CD4-positive, alpha-beta memory T cell (primary cell): ENCODE measurements at regions of chr16 and their contacts with region 1.

Region 1: GRCh38 chr16:89490387-89491237 is at the start of gene ANKRD11:
- DNase-seq: peak; percentile 99 to 100 (median 100)
- H3K4me3 ChIP-seq: peak within 1 kb of the TSS; percentile 64 to 72
- H3K4me3 Mint-ChIP-seq: peak within 1 kb of the TSS; percentile 88 to 97 (median 94)
- H3K27ac ChIP-seq: peak within 1 kb of the TSS; percentile 95
- H3K27ac Mint-ChIP-seq: peak within 1 kb of the TSS; percentile 96 to 99 (median 97)
- H3K4me1 ChIP-seq: peaks cover 57% of the 10 kb centered on the region
- H3K4me1 Mint-ChIP-seq: peaks cover 35 to 77% (median 57%) of the 10 kb centered on the region in 4 donors
- H3K27me3 ChIP-seq: no peaks in the 10 kb centered on the region
- H3K27me3 Mint-ChIP-seq: no peaks in the 10 kb centered on the region
- total RNA-seq, gene ANKRD11: 229 to 246 TPM

Region 2: GRCh38 chr16:89241187-89242007 is 249.2 kb before region 1 on chr16:
- CTCF ChIA-PET with region 1: no interaction called
- POLR2A ChIA-PET with region 1: no interaction called
- intact Hi-C with region 1: loop called (anchors 1 kb)
- DNase-seq: peak; percentile 92 to 97 (median 93)
- H3K4me3 ChIP-seq: peak overlapping the region; percentile 73 to 80
- H3K4me3 Mint-ChIP-seq: peak overlapping the region; percentile 90 to 98 (median 96)
- H3K27ac ChIP-seq: peak overlapping the region; percentile 91
- H3K27ac Mint-ChIP-seq: peak overlapping the region; percentile 95 to 100 (median 99)
- H3K4me1 ChIP-seq: peaks cover 13% of the 10 kb centered on the region
- H3K4me1 Mint-ChIP-seq: peaks cover 8 to 36% (median 18%) of the 10 kb centered on the region in 4 donors
- H3K27me3 ChIP-seq: no peaks in the 10 kb centered on the region
- H3K27me3 Mint-ChIP-seq: no peaks in the 10 kb centered on the region

Region 3: DNA sequence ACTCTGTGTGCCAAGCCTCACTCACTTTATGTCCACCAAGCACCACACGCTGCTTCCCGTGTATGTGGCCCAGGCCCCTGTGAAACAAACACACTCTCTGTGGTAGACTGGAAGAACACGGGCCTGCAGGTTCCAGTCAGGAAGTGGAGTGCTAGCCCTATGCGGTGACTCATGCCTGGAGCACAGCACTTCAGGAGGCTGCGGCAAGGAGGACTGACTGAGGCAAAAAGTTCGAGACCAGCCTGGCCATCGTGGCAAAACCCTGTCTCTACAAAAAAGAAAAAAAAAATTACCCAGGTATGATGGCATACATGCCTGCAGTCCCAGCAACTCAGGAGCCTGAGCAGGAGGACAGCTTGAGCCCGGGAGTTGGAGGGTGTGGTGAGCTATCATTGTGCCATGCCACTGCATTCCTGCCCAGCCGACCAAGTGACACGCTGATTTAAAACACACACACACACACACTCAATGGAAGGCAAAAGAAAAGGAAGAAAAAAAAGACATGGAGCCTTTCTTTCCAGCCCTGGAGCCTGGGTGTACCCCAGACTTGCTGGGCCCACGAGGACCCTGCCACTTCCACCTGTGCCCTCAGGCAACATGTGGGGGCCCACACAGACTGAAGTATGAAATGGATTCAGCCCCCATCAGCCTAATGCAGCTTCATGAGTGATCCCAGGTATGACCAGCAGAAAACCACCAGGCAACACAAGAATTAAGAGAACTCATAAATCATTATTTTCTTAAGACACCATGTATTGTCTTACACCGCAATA is 126.8 kb before region 1 on chr16:
- CTCF ChIA-PET with region 1: interaction called, 4 read pairs
- POLR2A ChIA-PET with region 1: interaction called, 16 read pairs
- intact Hi-C with region 1: loop called (anchors 1 kb)
- DNase-seq: peak in 4 of 5 donors; percentile 22 to 83 (median 28)
- H3K4me3 ChIP-seq: no peak overlapping the region
- H3K4me3 Mint-ChIP-seq: peak overlapping the region; percentile 22 to 76 (median 64)
- H3K27ac ChIP-seq: peak overlapping the region; percentile 26
- H3K27ac Mint-ChIP-seq: peak overlapping the region; percentile 85 to 92 (median 90)
- H3K4me1 ChIP-seq: peaks cover 85% of the 10 kb centered on the region
- H3K4me1 Mint-ChIP-seq: peaks cover 62 to 99% (median 82%) of the 10 kb centered on the region in 4 donors
- H3K27me3 ChIP-seq: no peaks in the 10 kb centered on the region
- H3K27me3 Mint-ChIP-seq: no peaks in the 10 kb centered on the region

Region 4: DNA sequence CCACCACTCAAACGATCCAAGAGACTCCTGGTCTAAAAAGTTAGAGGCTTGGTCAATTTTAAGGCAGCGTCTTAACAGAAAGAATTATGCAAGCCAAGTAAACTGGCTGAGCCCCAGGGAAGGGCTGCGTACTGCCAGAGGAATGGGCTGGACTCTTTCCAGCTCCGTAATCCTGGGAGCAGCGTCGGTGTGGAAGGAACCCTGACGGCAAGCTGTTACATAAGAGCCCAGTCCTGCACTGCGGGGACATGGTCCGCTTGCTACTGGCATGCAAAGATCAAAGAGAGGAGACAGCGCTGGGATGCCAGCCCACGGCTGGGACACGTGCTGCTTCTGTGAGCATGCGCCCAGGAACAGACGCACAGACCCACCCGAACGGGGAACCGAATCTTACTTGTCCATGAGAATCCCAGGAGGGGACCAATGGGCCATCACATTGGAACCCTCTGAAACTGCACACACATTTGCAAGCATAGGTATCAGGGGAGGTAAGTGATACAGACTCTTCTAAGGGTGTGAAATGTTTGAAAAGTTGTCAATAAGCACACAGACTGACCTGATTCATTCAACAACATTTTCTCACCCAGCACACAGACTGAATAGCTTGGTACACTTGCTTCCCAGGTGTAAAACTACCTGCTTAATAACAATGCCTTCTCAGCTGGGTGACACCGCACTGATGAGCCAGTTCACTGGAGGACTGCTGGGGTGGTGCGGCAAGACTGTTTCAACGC is 95.3 kb before region 1 on chr16:
- CTCF ChIA-PET with region 1: no interaction called
- POLR2A ChIA-PET with region 1: no interaction called
- intact Hi-C with region 1: no loop called
- DNase-seq: no peak
- H3K4me3 ChIP-seq: no peak overlapping the region
- H3K4me3 Mint-ChIP-seq: peak overlapping the region in 1 of 8 donors; percentile 34
- H3K27ac ChIP-seq: no peak overlapping the region
- H3K27ac Mint-ChIP-seq: peak overlapping the region in 4 of 7 donors; percentile 13 to 58 (median 36)
- H3K4me1 ChIP-seq: peaks cover 60% of the 10 kb centered on the region
- H3K4me1 Mint-ChIP-seq: peaks cover 37 to 78% (median 59%) of the 10 kb centered on the region in 4 donors
- H3K27me3 ChIP-seq: no peaks in the 10 kb centered on the region
- H3K27me3 Mint-ChIP-seq: no peaks in the 10 kb centered on the region

Region 5: GRCh38 chr16:89410794-89411309 is 79.8 kb before region 1 on chr16:
- CTCF ChIA-PET with region 1: interaction called, 4 read pairs
- POLR2A ChIA-PET with region 1: interaction called, 31 read pairs
- intact Hi-C with region 1: loop called (anchors 1 kb)
- DNase-seq: peak in 2 of 5 donors; percentile 21 to 28
- H3K4me3 ChIP-seq: no peak overlapping the region
- H3K4me3 Mint-ChIP-seq: peak overlapping the region in 7 of 8 donors; percentile 59 to 84 (median 69)
- H3K27ac ChIP-seq: peak overlapping the region; percentile 45
- H3K27ac Mint-ChIP-seq: peak overlapping the region; percentile 88 to 97 (median 95)
- H3K4me1 ChIP-seq: peaks cover 93% of the 10 kb centered on the region
- H3K4me1 Mint-ChIP-seq: peaks cover 57 to 93% (median 79%) of the 10 kb centered on the region in 4 donors
- H3K27me3 ChIP-seq: no peaks in the 10 kb centered on the region
- H3K27me3 Mint-ChIP-seq: no peaks in the 10 kb centered on the region

Region 6: GRCh38 chr16:89534252-89534756 is 43.7 kb after region 1 on chr16:
- CTCF ChIA-PET with region 1: no interaction called
- POLR2A ChIA-PET with region 1: interaction called, 12 read pairs
- intact Hi-C with region 1: no loop called
- DNase-seq: peak; percentile 52 to 65 (median 61)
- H3K4me3 ChIP-seq: no peak overlapping the region
- H3K4me3 Mint-ChIP-seq: peak overlapping the region; percentile 0 to 78 (median 64)
- H3K27ac ChIP-seq: peak overlapping the region; percentile 1
- H3K27ac Mint-ChIP-seq: peak overlapping the region; percentile 83 to 96 (median 93)
- H3K4me1 ChIP-seq: peaks cover 25% of the 10 kb centered on the region
- H3K4me1 Mint-ChIP-seq: peaks cover 14 to 24% (median 20%) of the 10 kb centered on the region in 4 donors
- H3K27me3 ChIP-seq: no peaks in the 10 kb centered on the region
- H3K27me3 Mint-ChIP-seq: no peaks in the 10 kb centered on the region